Panc1 (cell line): ENCODE measurements at regions of chr2 and their contacts with region 1.

Region 1: DNA sequence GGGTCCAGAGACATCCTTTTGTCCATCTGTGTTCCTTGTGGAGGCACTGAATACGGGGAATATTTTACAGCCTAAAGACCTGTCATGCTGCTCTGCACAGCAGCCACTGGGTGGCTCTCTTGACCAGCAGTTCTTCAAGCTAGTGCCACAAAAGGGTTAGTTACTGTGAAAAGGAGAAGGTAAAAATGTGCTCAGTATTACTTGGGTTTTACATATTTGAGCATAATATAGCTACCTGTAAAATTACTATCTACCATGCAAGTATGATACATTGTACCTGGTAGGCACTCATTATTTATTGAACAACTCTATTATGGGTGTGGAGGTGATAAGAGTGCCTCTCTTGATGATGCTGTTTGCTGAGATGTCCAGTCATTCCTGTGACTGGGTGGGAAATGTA is 23.6 kb downstream of the FZD5 start:
- DNase-seq: peak; percentile 32
- ATAC-seq: peak; percentile 91
- H3K4me3 ChIP-seq: no peak overlapping the region
- H3K27ac ChIP-seq: no peak overlapping the region
- H3K4me1 ChIP-seq: no peaks in the 10 kb centered on the region
- H3K27me3 ChIP-seq: no peaks in the 10 kb centered on the region
- CTCF ChIP-seq: peak; percentile 89

Region 2: DNA sequence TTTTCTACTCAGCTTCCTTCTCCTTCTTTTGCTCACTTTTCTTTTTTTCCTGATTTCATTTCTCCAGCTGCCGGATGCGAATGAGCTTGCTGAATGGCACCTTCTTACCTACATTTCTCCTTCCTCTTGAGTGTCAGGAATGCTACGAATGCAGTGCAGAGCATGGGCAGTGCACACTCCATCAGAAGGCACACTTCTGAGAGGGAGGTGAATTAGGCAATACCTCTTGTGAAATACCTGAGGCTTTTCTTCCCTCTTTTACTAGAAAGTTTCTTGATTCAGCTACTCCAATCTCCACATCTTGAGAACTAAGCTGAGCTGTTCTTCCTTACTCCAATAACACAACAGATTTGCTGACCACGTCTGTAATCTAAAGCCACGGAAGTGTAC is 228.1 kb after region 1 on chr2:
- CTCF ChIA-PET with region 1: interaction called, 3 read pairs
- POLR2A ChIA-PET with region 1: no interaction called
- in situ Hi-C with region 1: no loop called
- intact Hi-C with region 1: loop called (anchors 2 kb)
- DNase-seq: no peak
- ATAC-seq: no peak
- H3K4me3 ChIP-seq: no peak overlapping the region
- H3K27ac ChIP-seq: no peak overlapping the region
- H3K4me1 ChIP-seq: no peaks in the 10 kb centered on the region
- H3K27me3 ChIP-seq: no peaks in the 10 kb centered on the region; the same call in 1 of the 2 replicates
- CTCF ChIP-seq: no peak

Region 3: DNA sequence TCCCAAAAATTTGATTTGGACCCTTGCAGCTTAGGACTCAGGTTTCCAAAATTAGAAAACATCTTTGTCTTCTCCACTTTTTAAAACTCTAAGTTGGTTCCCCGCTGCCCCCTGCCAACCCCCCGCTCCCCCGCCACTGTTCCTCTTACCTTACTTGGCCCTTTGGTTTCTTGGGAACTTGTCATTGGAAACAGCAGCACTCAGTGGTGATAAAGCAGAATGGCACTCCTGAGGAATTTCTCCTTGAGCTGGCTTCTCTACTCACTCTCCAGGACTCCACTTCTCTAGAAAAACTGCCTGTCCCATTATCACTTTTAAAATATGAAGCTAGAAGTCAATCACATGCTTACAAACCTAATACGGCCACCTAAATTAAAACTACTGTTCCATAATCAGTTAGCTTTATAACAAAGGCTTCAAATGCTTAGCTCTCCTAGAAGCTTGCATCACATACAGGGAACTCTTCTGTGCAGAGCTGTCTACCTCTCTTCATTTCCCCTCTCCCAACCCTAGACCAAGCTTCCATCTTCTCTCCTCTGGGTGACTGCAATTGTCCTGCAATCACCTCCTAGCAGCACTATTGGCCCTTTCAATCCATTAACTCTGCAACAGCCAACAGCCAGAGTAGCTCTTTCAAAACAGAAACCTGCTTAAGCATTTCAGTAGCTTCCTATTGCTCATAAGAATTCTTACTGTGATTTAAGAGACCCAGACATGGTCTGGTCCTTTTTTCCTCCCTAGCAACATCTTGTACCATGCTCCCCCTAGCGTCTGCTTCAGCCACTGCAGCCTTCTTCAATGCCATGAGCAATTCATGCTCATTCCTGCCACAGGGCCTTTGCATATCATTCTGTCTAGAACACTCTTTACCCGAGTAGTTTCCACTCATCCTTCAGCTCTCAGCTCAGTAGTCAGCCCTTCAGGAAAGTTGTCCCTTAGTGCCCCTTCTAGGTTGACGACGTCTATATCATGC is 294.4 kb after region 1 on chr2:
- CTCF ChIA-PET with region 1: interaction called, 12 read pairs
- POLR2A ChIA-PET with region 1: no interaction called
- in situ Hi-C with region 1: no loop called
- intact Hi-C with region 1: loop called (anchors 2 kb)
- DNase-seq: no peak
- ATAC-seq: peak; percentile 82
- H3K4me3 ChIP-seq: no peak overlapping the region
- H3K27ac ChIP-seq: no peak overlapping the region
- H3K4me1 ChIP-seq: no peaks in the 10 kb centered on the region; the same call in 1 of the 2 replicates
- H3K27me3 ChIP-seq: no peaks in the 10 kb centered on the region
- CTCF ChIP-seq: peak; percentile 78

Region 4: GRCh38 chr2:208072250-208072892 is 326.2 kb after region 1 on chr2:
- CTCF ChIA-PET with region 1: no interaction called
- POLR2A ChIA-PET with region 1: interaction called, 3 read pairs
- in situ Hi-C with region 1: no loop called
- intact Hi-C with region 1: loop called (anchors 2 kb)
- DNase-seq: peak; percentile 70
- ATAC-seq: peak; percentile 96
- H3K4me3 ChIP-seq: no peak overlapping the region
- H3K27ac ChIP-seq: no peak overlapping the region
- H3K4me1 ChIP-seq: no peaks in the 10 kb centered on the region
- H3K27me3 ChIP-seq: no peaks in the 10 kb centered on the region; the same call in 1 of the 2 replicates
- CTCF ChIP-seq: peak; percentile 92

Region 5: DNA sequence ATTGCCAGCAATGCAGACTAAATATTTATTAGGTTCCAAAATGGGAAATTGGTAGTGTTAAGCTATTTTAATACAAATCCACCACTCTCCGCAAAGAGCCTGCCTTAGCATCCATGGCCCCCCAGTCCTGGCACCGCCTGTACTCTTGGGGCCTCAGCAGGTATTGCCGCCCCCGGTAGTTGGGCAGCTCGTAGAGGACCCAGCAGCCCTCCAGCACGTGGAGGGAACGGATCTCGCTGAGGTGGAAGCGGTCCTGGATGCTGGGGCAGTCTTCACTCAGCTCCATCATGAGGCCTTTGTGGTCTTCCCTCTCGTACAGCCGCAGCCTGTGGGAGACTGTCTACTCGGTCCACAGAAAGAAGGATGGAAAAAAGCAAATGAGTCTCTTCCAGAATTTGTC is 382.0 kb after region 1 on chr2:
- CTCF ChIA-PET with region 1: interaction called, 16 read pairs
- POLR2A ChIA-PET with region 1: no interaction called
- in situ Hi-C with region 1: no loop called
- intact Hi-C with region 1: no loop called
- DNase-seq: no peak
- ATAC-seq: no peak
- H3K4me3 ChIP-seq: no peak overlapping the region
- H3K27ac ChIP-seq: no peak overlapping the region
- H3K4me1 ChIP-seq: no peaks in the 10 kb centered on the region
- H3K27me3 ChIP-seq: no peaks in the 10 kb centered on the region
- CTCF ChIP-seq: no peak